Heart left ventricle (tissue), 16 donors: ENCODE measurements at regions of chr4 and their contacts with region 1.

Region 1: GRCh38 chr4:61473306-61473705 is 273.2 kb downstream of the ADGRL3 start:
- DNase-seq: no peak
- ATAC-seq: no peak
- H3K4me3 ChIP-seq: no peak overlapping the region
- H3K27ac ChIP-seq: no peak overlapping the region
- H3K4me1 ChIP-seq: no peaks in the 10 kb centered on the region
- H3K27me3 ChIP-seq: no peaks in the 10 kb centered on the region
- CTCF ChIP-seq: no peak
- POLR2A ChIP-seq: no peak

Region 2: GRCh38 chr4:60637976-60638375 is 835.3 kb before region 1 on chr4:
- intact Hi-C with region 1: no loop called
- DNase-seq: no peak
- ATAC-seq: no peak
- H3K4me3 ChIP-seq: no peak overlapping the region
- H3K27ac ChIP-seq: no peak overlapping the region
- H3K4me1 ChIP-seq: no peaks in the 10 kb centered on the region
- H3K27me3 ChIP-seq: no peaks in the 10 kb centered on the region
- CTCF ChIP-seq: no peak
- POLR2A ChIP-seq: no peak

Region 3: GRCh38 chr4:60905162-60905561 is 568.1 kb before region 1 on chr4:
- intact Hi-C with region 1: loop called in 1 of 10 experiments (anchors 5 kb)
- DNase-seq: no peak
- ATAC-seq: no peak
- H3K4me3 ChIP-seq: no peak overlapping the region
- H3K27ac ChIP-seq: no peak overlapping the region
- H3K4me1 ChIP-seq: no peaks in the 10 kb centered on the region
- H3K27me3 ChIP-seq: no peaks in the 10 kb centered on the region
- CTCF ChIP-seq: no peak
- POLR2A ChIP-seq: no peak